ENCODE measurements at regions of chr7 and their contacts with region 1.

Region 1: DNA sequence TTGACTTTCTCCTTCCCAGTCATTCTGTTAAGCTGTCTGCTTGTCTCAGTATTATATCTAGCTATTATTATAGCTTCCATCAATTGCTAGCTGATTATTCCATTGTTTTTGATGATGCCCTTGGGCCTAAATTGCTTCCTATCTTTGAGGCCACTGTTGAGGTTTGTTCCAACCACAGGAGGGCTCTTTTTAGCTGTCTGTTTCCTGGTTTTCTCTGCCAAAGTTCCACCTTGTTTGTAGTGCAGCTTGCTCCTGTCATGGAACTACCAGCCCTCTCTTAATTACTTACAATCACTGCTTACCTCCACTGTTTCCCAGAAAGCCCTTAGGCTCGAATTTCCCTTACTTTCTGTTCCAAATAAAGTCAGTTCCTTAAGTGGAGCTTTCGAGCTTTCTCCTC is 118.7 kb upstream of the SEC61G start:
- DNase-seq: peak; percentile 54
- ATAC-seq: peak; percentile 35
- H3K4me3 ChIP-seq: no peak overlapping the region
- H3K27ac ChIP-seq: no peak overlapping the region
- H3K4me1 ChIP-seq: peaks cover 30% of the 10 kb centered on the region
- H3K27me3 ChIP-seq: no peaks in the 10 kb centered on the region
- CTCF ChIP-seq: peak; percentile 56

Region 2: GRCh38 chr7:54907981-54908380 is 30.3 kb after region 1 on chr7:
- CTCF ChIA-PET with region 1: no interaction called
- POLR2A ChIA-PET with region 1: no interaction called
- intact Hi-C with region 1: no loop called
- DNase-seq: peak; percentile 61
- ATAC-seq: peak; percentile 43; the same call in 1 of the 2 replicates
- H3K4me3 ChIP-seq: no peak overlapping the region
- H3K27ac ChIP-seq: peak overlapping the region; percentile 62
- H3K4me1 ChIP-seq: peaks cover 24% of the 10 kb centered on the region
- H3K27me3 ChIP-seq: no peaks in the 10 kb centered on the region
- CTCF ChIP-seq: no peak

Region 3: DNA sequence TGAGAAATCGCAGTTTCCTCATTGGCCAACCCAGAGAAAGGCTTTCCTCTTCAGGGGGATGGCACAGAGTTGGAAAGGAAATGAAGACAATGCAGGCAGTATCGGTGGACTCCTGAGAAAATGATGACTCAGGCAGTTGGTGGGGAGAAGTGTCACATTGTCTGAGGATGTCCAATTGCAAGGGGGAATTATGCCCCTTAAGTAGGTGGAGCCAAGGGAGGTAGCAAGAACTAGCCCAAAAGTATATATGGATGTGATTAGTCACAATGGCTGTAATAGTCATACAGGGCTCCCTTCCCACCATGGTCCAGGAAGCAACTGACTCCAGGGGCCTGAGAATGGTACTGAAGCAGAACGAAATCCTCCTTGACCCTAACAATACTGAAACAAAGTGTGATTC is 82.8 kb after region 1 on chr7:
- CTCF ChIA-PET with region 1: no interaction called
- POLR2A ChIA-PET with region 1: no interaction called
- intact Hi-C with region 1: loop called (anchors 5 kb)
- DNase-seq: peak; percentile 70
- ATAC-seq: peak; percentile 47
- H3K4me3 ChIP-seq: no peak overlapping the region
- H3K27ac ChIP-seq: peak overlapping the region; percentile 84
- H3K4me1 ChIP-seq: peaks cover 39% of the 10 kb centered on the region
- H3K27me3 ChIP-seq: no peaks in the 10 kb centered on the region
- CTCF ChIP-seq: no peak

Region 4: DNA sequence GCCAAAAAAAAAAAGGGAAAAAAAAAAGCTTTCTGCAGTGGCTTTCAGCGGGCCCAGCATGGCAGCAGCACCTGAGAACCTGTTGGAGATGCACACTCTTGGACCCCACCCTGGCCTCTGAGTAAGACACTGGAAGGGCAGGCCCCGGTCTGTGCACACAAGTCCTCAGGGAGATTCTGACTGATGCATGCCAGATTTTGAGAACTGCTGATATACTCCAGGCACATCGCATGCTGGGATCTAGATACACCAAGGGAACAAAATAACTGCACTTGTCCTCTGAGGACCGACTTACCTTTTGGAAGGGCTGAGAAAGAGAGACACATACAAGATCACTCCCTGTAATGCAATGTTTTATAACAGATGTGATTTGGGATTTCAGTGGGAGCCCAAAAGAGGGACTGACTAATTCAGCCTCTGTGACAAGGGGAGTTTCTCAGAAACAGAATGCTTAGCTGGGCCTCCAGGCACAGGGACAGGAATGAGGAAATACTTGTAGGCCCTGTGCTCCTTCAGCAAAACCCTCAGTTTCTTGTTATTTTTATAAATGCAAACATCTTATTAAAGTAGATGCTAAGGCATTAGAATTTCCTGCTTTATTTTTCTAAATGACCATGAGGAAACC is 149.3 kb after region 1 on chr7:
- CTCF ChIA-PET with region 1: no interaction called
- POLR2A ChIA-PET with region 1: interaction called, 4 read pairs
- intact Hi-C with region 1: loop called (anchors 5 kb)
- DNase-seq: no peak
- ATAC-seq: peak; percentile 25; the same call in 1 of the 2 replicates
- H3K4me3 ChIP-seq: no peak overlapping the region
- H3K27ac ChIP-seq: 0 out of 2 replicates have a peak overlapping the region, but pooled peaks have one; percentile 2
- H3K4me1 ChIP-seq: peaks cover 53% of the 10 kb centered on the region
- H3K27me3 ChIP-seq: no peaks in the 10 kb centered on the region
- CTCF ChIP-seq: no peak

Measured in PC-3 (cell line).